ENCODE measurements at regions of chr9 and their contacts with region 1.

Region 1: DNA sequence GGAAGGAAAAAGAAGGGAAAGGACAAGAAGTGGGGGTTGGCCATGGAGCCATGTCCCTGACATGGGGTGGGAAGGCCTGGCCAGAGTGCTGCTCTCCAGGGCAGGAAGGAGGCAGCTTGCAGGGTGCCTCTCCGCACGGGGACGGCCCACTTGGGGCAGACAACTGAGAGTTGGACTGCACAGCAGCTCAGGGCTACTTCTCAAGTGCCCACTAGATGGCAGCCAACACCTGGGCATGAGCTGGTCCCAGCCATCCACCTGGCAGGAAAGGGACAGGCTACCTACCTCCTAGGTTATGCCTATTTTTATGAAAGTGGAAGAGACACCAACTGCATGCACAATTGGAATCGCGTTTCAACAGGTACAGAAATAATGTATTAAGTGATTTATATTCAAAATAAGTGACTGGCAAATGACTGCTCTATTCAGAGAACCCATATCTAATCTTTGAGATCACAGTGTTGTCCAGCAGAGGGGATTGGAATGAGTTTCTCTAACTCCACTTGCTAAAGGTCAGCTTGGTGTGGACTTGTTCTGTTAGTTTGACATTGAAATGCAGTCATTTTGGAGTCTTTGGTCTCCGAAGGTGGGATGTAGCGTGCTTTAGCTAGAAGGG is 113.4 kb downstream of the SYK start:
- DNase-seq: no peak
- H3K4me3 ChIP-seq: no peak overlapping the region
- H3K27ac ChIP-seq: no peak overlapping the region
- H3K4me1 ChIP-seq: peaks cover 0 to 12% (median 0%) of the 10 kb centered on the region in 3 donors
- H3K27me3 ChIP-seq: peaks cover 0 to 13% (median 0%) of the 10 kb centered on the region in 4 donors
- CTCF ChIP-seq: peak; percentile 75 to 97 (median 94)
- POLR2A ChIP-seq: no peak

Region 2: GRCh38 chr9:90593625-90594024 is 321.4 kb before region 1 on chr9:
- intact Hi-C with region 1: no loop called
- DNase-seq: no peak
- H3K4me3 ChIP-seq: no peak overlapping the region
- H3K27ac ChIP-seq: no peak overlapping the region
- H3K4me1 ChIP-seq: no peaks in the 10 kb centered on the region
- H3K27me3 ChIP-seq: peaks cover 0 to 7% (median 0%) of the 10 kb centered on the region in 4 donors
- CTCF ChIP-seq: no peak
- POLR2A ChIP-seq: no peak

Region 3: GRCh38 chr9:91433180-91433579 is 518.2 kb after region 1 on chr9:
- intact Hi-C with region 1: loop called (anchors 5 kb)
- DNase-seq: no peak
- H3K4me3 ChIP-seq: no peak overlapping the region
- H3K27ac ChIP-seq: no peak overlapping the region
- H3K4me1 ChIP-seq: peaks cover 0 to 23% (median 7%) of the 10 kb centered on the region in 3 donors
- H3K27me3 ChIP-seq: peaks cover 0 to 25% (median 0%) of the 10 kb centered on the region in 4 donors
- CTCF ChIP-seq: peak; percentile 23 to 63 (median 48)
- POLR2A ChIP-seq: no peak

Region 4: DNA sequence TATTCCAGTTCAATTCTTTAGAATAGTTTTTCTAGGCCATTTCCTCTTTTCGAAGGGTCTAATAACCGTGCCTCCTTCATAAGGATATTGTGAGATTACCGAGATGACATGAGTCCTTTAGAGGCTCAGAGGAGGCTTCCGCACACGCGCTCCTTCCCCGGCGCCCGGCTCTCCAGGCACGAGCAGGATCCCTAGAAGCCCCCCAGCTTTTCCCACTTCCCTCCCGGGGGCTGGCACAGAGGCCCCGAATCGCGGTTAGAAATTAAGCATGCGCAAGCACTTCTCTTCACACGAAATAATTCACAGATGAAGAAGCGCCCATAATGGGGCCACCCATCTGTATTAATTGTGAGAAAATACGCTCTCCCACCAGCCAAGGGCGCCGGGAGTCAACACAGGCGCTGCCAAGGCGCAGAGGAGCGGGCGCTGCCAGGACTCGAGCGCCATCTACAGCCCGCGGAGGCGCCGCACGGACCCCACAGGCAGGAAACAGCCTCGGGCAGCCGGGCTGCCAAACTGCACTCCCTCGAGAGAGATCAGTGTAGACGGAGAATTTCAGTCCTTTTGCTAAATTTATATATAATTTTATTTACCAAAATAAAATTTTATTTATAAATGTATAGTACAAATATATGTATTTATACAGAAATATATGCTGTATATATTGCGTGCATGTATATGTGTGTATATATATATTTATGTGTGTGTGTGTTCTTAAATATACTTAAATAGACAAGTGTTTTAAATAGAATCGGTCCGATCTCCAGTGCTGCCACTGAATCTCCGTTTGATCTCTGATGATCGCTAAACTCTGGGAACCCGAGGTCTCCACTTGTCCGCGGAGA is 766.7 kb after region 1 on chr9:
- intact Hi-C with region 1: loop called (anchors 5 kb)
- DNase-seq: peak; percentile 11
- H3K4me3 ChIP-seq: peak overlapping the region in 1 of 4 donors; percentile 42
- H3K27ac ChIP-seq: no peak overlapping the region
- H3K4me1 ChIP-seq: peaks cover 0 to 7% (median 0%) of the 10 kb centered on the region in 3 donors
- H3K27me3 ChIP-seq: peaks cover 0 to 31% (median 0%) of the 10 kb centered on the region in 4 donors
- CTCF ChIP-seq: peak; percentile 38 to 87 (median 71)
- POLR2A ChIP-seq: no peak

Region 5: DNA sequence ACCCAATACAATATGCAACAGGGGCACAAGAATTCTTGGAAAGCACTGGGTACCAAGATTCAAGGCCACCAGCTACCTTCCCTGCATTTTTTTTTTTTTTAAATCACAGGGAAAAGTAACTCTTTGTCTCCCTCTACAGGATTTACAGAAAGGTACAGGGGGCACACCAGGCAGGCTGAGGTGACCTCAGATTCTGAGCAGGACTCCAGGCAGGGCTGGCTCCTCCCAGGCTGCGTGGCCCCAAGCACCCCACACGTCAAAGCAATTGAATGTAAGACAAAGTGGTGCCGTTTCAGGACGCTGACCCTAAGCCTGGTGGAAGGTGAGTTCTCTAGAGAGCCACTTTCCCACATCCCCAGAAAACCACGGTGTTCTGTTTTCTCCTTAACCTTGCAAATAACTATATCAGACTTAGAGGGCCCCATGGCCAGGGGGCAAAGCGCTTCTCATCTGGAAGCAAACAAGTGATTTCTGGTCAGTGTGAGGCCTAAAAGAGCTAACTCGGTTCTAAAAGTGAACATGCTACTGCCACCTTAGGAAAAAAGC is 812.4 kb after region 1 on chr9:
- intact Hi-C with region 1: loop called (anchors 10 kb)
- DNase-seq: no peak
- H3K4me3 ChIP-seq: no peak overlapping the region
- H3K27ac ChIP-seq: peak overlapping the region in 2 of 4 donors; percentile 21 to 30
- H3K4me1 ChIP-seq: peaks cover 0 to 19% (median 7%) of the 10 kb centered on the region in 3 donors
- H3K27me3 ChIP-seq: peaks cover 0 to 43% (median 0%) of the 10 kb centered on the region in 4 donors
- CTCF ChIP-seq: peak; percentile 43 to 81 (median 62)
- POLR2A ChIP-seq: no peak

Measured in esophagus squamous epithelium (tissue), 5 donors.